MCF 10A (cell line): ENCODE measurements at regions of chr12 and their contacts with region 1.

Region 1: DNA sequence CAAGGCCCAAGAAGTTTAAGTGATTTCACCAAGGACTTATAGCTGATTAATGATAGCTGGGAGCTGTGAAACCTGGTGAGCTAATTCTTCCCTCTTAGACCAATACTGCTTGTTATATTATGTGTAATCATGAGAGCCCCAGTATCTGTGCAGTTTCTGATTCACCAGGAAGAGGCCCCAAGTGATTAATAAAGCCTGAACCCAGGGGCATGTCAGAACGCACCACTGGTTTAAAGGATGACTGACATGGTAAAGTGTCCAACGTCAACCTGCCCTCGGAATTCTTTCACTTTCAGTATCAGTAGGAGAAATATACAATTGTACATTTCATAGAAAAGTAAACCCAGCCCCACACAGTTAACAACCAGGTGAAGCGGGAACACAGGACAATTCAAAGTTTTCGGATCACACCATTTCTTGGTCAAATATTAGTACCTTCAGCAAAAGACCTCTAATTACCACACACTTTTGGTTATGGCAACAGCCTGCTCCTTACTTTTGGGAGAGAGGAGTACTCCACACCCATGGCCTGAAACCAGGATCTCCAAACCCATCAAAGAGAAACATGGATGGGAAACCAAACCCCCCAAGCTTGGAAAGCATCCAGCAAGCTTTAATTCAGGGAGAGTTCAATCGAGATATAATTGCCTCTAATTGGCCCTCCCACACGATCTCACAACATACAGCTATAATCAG is 28.5 kb downstream of the TMCC3 start:
- DNase-seq: peak; percentile 93
- H3K4me3 Mint-ChIP-seq: peak overlapping the region; percentile 69
- H3K27ac Mint-ChIP-seq: peak overlapping the region; percentile 97
- H3K4me1 Mint-ChIP-seq: peaks cover 14% of the 10 kb centered on the region
- H3K27me3 Mint-ChIP-seq: no peaks in the 10 kb centered on the region
- CTCF ChIP-seq: no peak

Region 2: DNA sequence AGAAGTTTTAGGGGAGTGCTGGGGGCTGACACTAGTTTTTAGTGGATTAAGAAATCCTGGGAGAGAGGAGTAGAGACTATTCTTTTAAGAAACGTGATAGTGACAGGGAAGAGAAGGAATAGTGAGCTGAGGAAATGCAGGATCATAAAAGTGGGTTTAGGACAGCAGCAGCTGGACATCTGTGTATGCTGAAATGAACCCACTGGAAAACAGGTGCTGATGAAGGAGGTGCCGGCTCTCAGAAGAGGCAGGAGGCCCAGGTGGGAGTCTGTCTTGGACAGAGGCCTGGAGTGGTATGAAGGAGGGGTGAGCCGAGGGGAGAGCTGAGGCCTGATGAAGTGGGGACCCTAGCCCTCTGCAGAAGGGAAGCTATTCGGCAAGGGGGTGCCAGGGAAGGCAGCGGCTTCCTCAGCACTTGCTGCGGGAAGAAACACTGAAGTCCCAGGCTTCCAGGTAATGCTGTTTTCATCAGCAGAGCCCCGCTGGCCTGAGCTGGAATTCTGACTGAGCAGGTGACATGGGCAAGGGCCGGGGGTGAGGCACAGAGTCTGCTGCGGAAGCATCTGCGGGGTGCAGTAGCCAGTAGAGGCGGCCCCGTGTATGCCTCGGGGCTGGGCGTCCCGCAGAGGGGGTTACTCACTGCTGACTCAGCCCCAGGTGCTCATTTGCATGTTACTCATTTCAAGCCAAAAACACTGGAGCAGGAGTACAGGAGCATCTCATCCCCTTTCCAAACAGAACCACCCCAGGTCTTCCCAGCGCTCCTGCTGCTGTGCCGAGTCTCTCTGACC is 61.2 kb before region 1 on chr12:
- CTCF ChIA-PET with region 1: interaction called, 6 read pairs
- POLR2A ChIA-PET with region 1: interaction called, 15 read pairs
- intact Hi-C with region 1: no loop called
- DNase-seq: peak; percentile 93
- H3K4me3 Mint-ChIP-seq: peak overlapping the region; percentile 47
- H3K27ac Mint-ChIP-seq: peak overlapping the region; percentile 90
- H3K4me1 Mint-ChIP-seq: peaks cover 26% of the 10 kb centered on the region
- H3K27me3 Mint-ChIP-seq: no peaks in the 10 kb centered on the region
- CTCF ChIP-seq: no peak

Region 3: GRCh38 chr12:94636462-94637085 is 14.8 kb after region 1 on chr12:
- CTCF ChIA-PET with region 1: interaction called, 4 read pairs
- POLR2A ChIA-PET with region 1: interaction called, 32 read pairs
- intact Hi-C with region 1: loop called (anchors 1 kb)
- DNase-seq: peak; percentile 59
- H3K4me3 Mint-ChIP-seq: no peak overlapping the region
- H3K27ac Mint-ChIP-seq: peak overlapping the region; percentile 27
- H3K4me1 Mint-ChIP-seq: peaks cover 14% of the 10 kb centered on the region
- H3K27me3 Mint-ChIP-seq: no peaks in the 10 kb centered on the region
- CTCF ChIP-seq: no peak